CD4-positive, alpha-beta T cell (primary cell): ENCODE measurements at regions of chr6 and their contacts with region 1.

Region 1: DNA sequence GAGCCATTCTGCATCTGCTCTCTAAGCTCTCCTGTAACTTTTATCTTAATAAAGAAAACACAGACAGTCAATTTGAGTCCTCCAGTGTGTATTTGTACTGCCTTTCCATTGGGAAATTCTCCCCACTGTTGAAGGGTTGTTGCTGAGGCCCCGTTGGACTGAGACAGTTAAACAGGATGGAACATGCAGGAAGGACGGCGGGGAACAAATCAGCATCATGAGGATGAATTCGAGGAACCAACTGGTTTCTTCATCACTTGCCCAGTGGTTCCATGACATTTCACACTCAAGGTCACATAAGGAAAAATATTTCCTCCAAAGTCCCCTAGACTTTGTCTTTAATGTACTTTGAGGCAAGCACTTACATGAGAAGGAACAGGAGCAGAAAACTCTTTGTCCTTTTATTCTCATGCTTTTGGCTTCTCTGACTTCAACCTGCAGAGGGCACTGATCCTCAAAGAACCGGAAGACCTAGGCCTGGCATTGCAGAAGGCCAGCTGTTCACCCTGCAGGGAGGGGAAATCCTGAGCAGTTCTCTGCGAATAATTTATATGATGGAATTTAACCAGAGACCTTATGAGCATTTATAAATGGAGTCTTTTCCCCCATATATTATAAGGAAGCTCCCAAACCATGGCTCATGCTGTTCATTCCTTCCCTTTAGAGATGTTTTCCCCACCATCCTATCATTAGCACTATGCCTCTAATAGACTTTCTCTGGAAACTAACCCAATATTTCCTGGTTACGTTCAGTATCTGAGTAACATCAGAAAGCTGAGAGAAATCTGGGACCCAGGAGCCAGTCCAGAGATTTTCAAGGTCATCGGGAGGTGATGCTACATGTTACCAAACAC is 55.2 kb upstream of the ADGRF1 start:
- DNase-seq: peak in 7 of 14 experiments; percentile 4 to 61 (median 23)
- ATAC-seq: peak; percentile 55
- H3K4me3 ChIP-seq: no peak overlapping the region
- H3K4me3 Mint-ChIP-seq: no peak overlapping the region
- H3K27ac ChIP-seq: no peak overlapping the region
- H3K27ac Mint-ChIP-seq: no peak overlapping the region
- H3K4me1 ChIP-seq: no peaks in the 10 kb centered on the region
- H3K4me1 Mint-ChIP-seq: no peaks in the 10 kb centered on the region
- H3K27me3 ChIP-seq: no peaks in the 10 kb centered on the region
- H3K27me3 Mint-ChIP-seq: no peaks in the 10 kb centered on the region
- CTCF ChIP-seq: peak; percentile 35

Region 2: DNA sequence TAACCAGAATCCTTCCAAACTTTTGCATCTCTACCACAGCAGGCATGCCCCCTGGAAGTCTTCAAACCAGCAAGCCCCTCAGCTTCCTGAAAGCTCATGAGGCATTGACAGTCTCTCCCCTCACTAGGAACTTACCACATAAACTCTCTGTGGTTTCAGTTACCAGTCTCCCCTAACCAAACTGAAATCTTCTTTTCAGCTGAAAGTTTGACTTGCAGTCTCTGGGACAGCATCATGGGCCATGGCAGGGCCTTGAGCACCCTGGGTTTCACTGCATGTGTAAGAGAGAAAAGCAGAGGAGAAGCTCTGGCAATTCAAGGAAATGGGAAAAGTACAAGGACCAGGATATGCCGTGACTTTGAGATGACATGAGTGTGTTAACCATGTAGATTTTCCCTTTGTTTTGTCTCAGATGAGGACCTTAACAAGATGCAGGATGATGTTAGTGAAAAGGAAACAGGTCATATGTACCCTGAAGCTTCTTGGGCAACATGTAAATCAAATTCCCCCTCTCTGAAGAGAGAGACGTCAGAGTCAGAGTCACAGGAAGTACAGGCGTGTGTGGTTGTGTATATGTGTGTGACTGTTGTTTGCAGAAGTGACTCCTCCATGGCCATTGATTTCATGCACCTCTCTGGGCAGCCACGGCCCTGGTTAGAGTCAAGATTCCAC is 106.1 kb after region 1 on chr6:
- CTCF ChIA-PET with region 1: no interaction called
- POLR2A ChIA-PET with region 1: no interaction called
- intact Hi-C with region 1: no loop called
- DNase-seq: peak in 3 of 14 experiments; percentile 15 to 40 (median 34)
- ATAC-seq: peak; percentile 84
- H3K4me3 ChIP-seq: no peak overlapping the region
- H3K4me3 Mint-ChIP-seq: no peak overlapping the region
- H3K27ac ChIP-seq: no peak overlapping the region
- H3K27ac Mint-ChIP-seq: peak overlapping the region; percentile 85
- H3K4me1 ChIP-seq: no peaks in the 10 kb centered on the region
- H3K4me1 Mint-ChIP-seq: peaks cover 15% of the 10 kb centered on the region
- H3K27me3 ChIP-seq: no peaks in the 10 kb centered on the region
- H3K27me3 Mint-ChIP-seq: no peaks in the 10 kb centered on the region
- CTCF ChIP-seq: no peak

Region 3: GRCh38 chr6:47252633-47253032 is 155.3 kb after region 1 on chr6:
- CTCF ChIA-PET with region 1: no interaction called
- POLR2A ChIA-PET with region 1: no interaction called
- intact Hi-C with region 1: loop called in 1 of 2 experiments (anchors 1 kb)
- DNase-seq: peak in 2 of 14 experiments; percentile 8 to 9
- ATAC-seq: no peak
- H3K4me3 ChIP-seq: no peak overlapping the region
- H3K4me3 Mint-ChIP-seq: no peak overlapping the region
- H3K27ac ChIP-seq: no peak overlapping the region
- H3K27ac Mint-ChIP-seq: no peak overlapping the region
- H3K4me1 ChIP-seq: no peaks in the 10 kb centered on the region
- H3K4me1 Mint-ChIP-seq: no peaks in the 10 kb centered on the region
- H3K27me3 ChIP-seq: no peaks in the 10 kb centered on the region
- H3K27me3 Mint-ChIP-seq: no peaks in the 10 kb centered on the region
- CTCF ChIP-seq: no peak